Activated CD8-positive, alpha-beta T cell treated with anti-CD3 and anti-CD28 coated beads, Interleukin-2, amount 10 ng/mL, durations not matched to agents 7 days and 5 days (primary cell): ENCODE measurements at regions of chr1 and their contacts with region 1.

Region 1: DNA sequence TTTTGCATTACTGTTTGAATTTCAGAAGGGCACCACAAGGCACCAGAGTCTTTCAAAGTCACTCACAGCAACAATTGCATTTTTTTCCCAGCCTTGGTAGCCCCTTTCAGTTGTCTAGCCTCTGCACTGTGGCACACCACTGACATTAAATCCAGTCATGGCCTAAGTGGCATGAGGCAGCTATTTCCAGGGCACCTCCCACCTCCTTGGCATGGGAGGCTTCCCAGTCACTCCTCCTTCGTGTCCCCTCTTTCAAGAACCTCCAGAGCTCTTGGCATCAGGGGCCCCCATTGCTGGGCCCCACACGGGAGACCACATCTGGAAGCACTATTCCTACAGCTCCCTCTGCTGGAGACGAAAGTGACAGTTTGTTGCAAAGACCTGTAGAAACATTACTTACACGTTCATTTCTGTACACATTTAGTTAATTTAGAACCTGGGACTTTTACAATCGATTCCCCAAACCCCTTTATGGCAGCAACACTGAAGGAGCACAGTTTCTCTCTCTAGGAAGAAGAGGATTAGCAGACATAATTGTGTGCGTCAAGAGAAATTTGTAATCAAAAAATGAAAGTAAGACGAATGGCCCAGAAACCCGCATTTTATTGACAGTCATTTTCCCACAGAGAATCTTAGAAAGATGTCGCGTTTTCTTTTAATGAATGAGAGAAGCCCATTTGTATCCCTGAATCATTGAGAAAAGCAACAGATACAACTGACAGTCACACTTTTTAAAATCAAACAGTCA is 5.7 kb upstream of the CHD5 start:
- DNase-seq: peak; percentile 45
- ATAC-seq: no peak
- H3K4me3 Mint-ChIP-seq: no peak overlapping the region
- H3K27ac Mint-ChIP-seq: no peak overlapping the region
- H3K4me1 Mint-ChIP-seq: peaks cover 17% of the 10 kb centered on the region
- H3K27me3 Mint-ChIP-seq: peaks cover 17% of the 10 kb centered on the region

Region 2: GRCh38 chr1:6199298-6200187 is 13.7 kb after region 1 on chr1 and contains the start of gene RPL22:
- CTCF ChIA-PET with region 1: interaction called, 13 read pairs
- POLR2A ChIA-PET with region 1: interaction called, 3 read pairs
- DNase-seq: peak; percentile 99
- ATAC-seq: peak; percentile 98
- H3K4me3 Mint-ChIP-seq: peak within 1 kb of the TSS; percentile 82
- H3K27ac Mint-ChIP-seq: peak within 1 kb of the TSS; percentile 70
- H3K4me1 Mint-ChIP-seq: peaks cover 42% of the 10 kb centered on the region
- H3K27me3 Mint-ChIP-seq: no peaks in the 10 kb centered on the region
- total RNA-seq, gene RPL22: 304 to 325 TPM